ENCODE measurements at regions of chr1 and their contacts with region 1.

Region 1: DNA sequence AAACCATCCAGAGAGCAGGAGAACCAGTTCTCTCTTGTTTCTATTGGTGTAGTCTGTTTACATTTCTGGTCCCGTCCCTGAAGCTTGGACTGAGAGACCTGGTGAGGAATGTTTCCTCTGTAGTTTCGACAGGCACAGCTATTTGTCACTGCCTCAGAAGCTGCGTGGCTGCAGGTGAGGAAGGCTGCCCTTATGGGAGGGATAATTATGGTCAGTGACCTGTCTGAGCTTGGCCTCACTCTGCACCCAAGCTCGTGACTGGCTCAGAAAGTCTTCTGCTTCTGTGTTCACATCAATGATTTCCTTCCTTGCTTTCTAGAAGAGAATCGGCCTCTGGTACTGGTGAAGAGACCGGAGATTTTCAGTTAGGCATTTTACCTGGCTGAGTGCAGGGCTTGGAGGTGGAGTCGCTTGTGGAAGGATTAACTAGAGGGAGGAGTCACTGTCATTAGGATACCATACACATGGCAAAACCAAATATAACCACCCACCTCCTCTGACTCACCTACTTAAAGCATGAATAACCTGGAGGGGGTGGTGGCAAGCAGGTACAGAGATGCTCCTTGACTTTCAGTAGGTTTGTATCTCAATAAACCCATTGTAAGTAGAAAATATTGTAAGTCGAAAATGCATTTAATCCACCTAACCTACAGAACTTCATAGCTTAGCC is 19.9 kb upstream of the WDR26 start:
- DNase-seq: peak; percentile 55
- H3K4me3 Mint-ChIP-seq: peak overlapping the region; percentile 65
- H3K27ac Mint-ChIP-seq: peak overlapping the region; percentile 57
- H3K4me1 Mint-ChIP-seq: peaks cover 25% of the 10 kb centered on the region
- H3K27me3 Mint-ChIP-seq: no peaks in the 10 kb centered on the region
- CTCF ChIP-seq: no peak

Region 2: GRCh38 chr1:224356685-224357625 is 97.6 kb before region 1 on chr1 and contains the start of gene CNIH4:
- CTCF ChIA-PET with region 1: interaction called, 4 read pairs
- intact Hi-C with region 1: loop called (anchors 1 kb)
- DNase-seq: peak; percentile 94
- H3K4me3 Mint-ChIP-seq: peak within 1 kb of the TSS; percentile 97
- H3K27ac Mint-ChIP-seq: peak within 1 kb of the TSS; percentile 18
- H3K4me1 Mint-ChIP-seq: peaks cover 21% of the 10 kb centered on the region
- H3K27me3 Mint-ChIP-seq: no peaks in the 10 kb centered on the region
- CTCF ChIP-seq: no peak
- total RNA-seq, gene CNIH4: 79.9 and 91.4 TPM in 2 replicates

Region 3: DNA sequence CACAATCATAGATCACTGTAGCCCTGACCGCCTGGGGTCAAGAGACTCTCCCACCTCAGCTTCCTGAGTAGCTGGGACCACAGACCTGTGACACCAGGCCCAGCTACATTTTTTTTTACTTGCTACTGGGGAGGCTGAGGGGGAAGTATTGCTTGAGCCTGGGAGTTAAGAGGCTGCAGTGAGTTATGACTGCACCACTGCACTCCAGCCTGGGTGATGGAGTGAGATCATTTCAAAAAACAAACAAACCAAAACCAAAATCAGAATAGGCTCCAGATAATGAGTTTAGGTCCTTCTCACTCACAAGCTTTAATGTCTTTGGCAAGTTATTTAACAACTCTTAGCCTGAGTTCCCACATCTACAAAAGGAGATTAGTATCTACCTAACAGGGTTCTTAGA is 42.8 kb before region 1 on chr1:
- CTCF ChIA-PET with region 1: no interaction called
- intact Hi-C with region 1: loop called (anchors 5 kb)
- DNase-seq: no peak
- H3K4me3 Mint-ChIP-seq: no peak overlapping the region
- H3K27ac Mint-ChIP-seq: no peak overlapping the region
- H3K4me1 Mint-ChIP-seq: peaks cover 19% of the 10 kb centered on the region
- H3K27me3 Mint-ChIP-seq: no peaks in the 10 kb centered on the region
- CTCF ChIP-seq: no peak

Region 4: DNA sequence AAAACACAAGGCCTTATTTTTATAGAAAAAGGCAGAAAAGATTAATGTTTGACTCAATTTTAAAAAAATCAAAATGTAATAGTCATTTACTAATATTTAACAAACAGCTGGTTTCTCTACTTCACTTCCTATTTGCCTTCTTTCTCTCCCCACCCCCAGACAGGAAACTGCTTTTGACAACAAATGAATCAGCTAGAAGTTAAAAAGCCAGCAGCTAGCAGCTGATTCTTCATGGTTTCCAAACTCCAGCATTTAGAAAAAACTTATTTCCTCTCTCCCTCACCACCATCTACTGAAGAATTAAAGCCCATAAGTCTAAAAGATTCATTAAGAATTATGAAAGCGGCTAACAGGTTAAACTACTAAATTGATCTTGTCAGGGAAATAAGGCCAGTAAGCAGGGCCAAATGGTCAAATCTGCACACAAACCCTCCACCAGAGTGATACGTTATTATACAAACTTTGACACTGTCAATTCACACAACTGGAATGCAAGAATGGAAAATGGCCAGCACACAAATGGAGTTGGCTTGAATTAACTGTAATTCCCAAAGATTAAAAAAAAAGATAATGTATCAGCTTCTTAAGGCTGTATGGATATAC is 23.9 kb before region 1 on chr1:
- CTCF ChIA-PET with region 1: interaction called, 14 read pairs
- intact Hi-C with region 1: no loop called
- DNase-seq: peak; percentile 44
- H3K4me3 Mint-ChIP-seq: peak overlapping the region; percentile 43
- H3K27ac Mint-ChIP-seq: peak overlapping the region; percentile 23
- H3K4me1 Mint-ChIP-seq: peaks cover 32% of the 10 kb centered on the region
- H3K27me3 Mint-ChIP-seq: no peaks in the 10 kb centered on the region
- CTCF ChIP-seq: no peak

Region 5: GRCh38 chr1:224435999-224436398 is 18.5 kb before region 1 on chr1:
- CTCF ChIA-PET with region 1: interaction called, 14 read pairs
- intact Hi-C with region 1: loop called (anchors 2 kb)
- DNase-seq: peak; percentile 28
- H3K4me3 Mint-ChIP-seq: peak overlapping the region; percentile 81
- H3K27ac Mint-ChIP-seq: peak overlapping the region; percentile 83
- H3K4me1 Mint-ChIP-seq: peaks cover 40% of the 10 kb centered on the region
- H3K27me3 Mint-ChIP-seq: no peaks in the 10 kb centered on the region
- CTCF ChIP-seq: no peak